ENCODE measurements at regions of chr12 and their contacts with region 1.

Region 1: GRCh38 chr12:30500532-30501209 is 195.0 kb downstream of the IPO8 start:
- DNase-seq: no peak
- ATAC-seq: no peak
- H3K4me3 ChIP-seq: no peak overlapping the region
- H3K27ac ChIP-seq: no peak overlapping the region
- H3K4me1 ChIP-seq: no peaks in the 10 kb centered on the region
- H3K27me3 ChIP-seq: peaks cover 3% of the 10 kb centered on the region
- CTCF ChIP-seq: no peak
- POLR2A ChIP-seq: no peak
- RAD21 ChIP-seq: no peak

Region 2: GRCh38 chr12:30484658-30485057 is 16.0 kb before region 1 on chr12:
- CTCF ChIA-PET with region 1: no interaction called
- POLR2A ChIA-PET with region 1: interaction called, 12 read pairs
- dilution Hi-C with region 1: no loop called
- in situ Hi-C with region 1: no loop called
- intact Hi-C with region 1: no loop called
- DNase-seq: no peak
- ATAC-seq: no peak
- H3K4me3 ChIP-seq: no peak overlapping the region
- H3K27ac ChIP-seq: no peak overlapping the region
- H3K4me1 ChIP-seq: no peaks in the 10 kb centered on the region
- H3K27me3 ChIP-seq: no peaks in the 10 kb centered on the region; the same call in 1 of the 2 replicates
- CTCF ChIP-seq: no peak
- POLR2A ChIP-seq: no peak
- RAD21 ChIP-seq: no peak

Measured in IMR-90 (cell line).